Left ventricle myocardium superior (tissue), 1 donor: ENCODE measurements at regions of chr2 and their contacts with region 1.

Region 1: GRCh38 chr2:222707689-222708525 is 36.4 kb downstream of the MOGAT1 start:
- DNase-seq: peak; percentile 91
- ATAC-seq: peak; percentile 66

Region 2: GRCh38 chr2:222146488-222146887 is 561.4 kb before region 1 on chr2:
- intact Hi-C with region 1: no loop called
- DNase-seq: no peak
- ATAC-seq: no peak

Region 3: GRCh38 chr2:222797261-222797660 is 89.4 kb after region 1 on chr2:
- intact Hi-C with region 1: loop called (anchors 10 kb)
- DNase-seq: no peak
- ATAC-seq: no peak

Region 4: GRCh38 chr2:222860740-222861410 is 153.0 kb after region 1 on chr2 and contains the start of gene ACSL3:
- intact Hi-C with region 1: loop called (anchors 5 kb)
- DNase-seq: peak; percentile 99
- ATAC-seq: peak; percentile 96
- total RNA-seq, gene ACSL3: 48.8 TPM

Region 5: DNA sequence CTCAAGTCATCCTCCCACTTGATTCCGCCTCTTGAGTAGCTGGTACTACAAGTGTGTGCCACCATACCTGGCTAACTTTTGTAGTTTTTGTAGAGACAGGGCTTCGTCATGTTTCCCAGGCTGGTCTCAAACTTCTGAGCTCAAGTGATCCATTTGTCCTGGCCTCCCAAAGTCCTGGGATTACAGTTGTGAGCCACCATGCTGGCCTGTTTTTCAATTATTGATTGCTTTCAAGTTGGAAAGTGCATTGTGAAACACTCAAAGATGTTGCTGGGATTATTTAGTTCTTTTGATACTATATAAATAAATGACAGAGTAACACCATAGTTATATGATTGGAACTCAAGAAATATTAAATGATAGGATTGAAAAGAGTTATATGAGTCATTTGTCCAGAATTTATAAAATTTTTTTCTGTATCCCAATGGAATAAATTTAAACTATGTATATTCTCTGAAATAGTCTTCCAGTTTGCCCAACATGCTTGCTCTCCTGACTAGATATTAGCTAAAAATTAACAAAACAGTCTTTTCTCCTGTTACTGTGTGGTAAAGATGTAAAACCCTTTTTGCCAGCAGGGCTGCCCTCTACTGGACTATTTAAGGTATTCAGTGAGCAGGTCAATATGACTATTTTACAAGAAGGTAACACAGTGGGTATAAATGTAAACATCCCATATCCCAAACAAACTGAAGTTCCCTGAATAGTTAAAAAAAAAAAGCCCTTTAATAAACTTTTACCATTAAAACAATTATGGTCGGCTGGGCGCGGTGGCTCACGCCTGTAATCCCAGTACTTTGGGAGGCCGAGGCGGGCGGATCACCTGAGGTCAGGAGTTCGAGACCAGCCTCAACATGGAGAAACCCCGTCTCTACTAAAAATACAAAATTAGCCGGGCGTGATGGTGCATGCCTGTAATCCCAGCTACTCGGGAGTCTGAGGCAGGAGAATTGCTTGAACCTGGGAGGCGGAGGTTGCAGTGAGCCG is 195.6 kb after region 1 on chr2:
- intact Hi-C with region 1: loop called (anchors 5 kb)
- DNase-seq: no peak
- ATAC-seq: peak; percentile 73